ENCODE measurements at regions of chr20 and their contacts with region 1.

Region 1: DNA sequence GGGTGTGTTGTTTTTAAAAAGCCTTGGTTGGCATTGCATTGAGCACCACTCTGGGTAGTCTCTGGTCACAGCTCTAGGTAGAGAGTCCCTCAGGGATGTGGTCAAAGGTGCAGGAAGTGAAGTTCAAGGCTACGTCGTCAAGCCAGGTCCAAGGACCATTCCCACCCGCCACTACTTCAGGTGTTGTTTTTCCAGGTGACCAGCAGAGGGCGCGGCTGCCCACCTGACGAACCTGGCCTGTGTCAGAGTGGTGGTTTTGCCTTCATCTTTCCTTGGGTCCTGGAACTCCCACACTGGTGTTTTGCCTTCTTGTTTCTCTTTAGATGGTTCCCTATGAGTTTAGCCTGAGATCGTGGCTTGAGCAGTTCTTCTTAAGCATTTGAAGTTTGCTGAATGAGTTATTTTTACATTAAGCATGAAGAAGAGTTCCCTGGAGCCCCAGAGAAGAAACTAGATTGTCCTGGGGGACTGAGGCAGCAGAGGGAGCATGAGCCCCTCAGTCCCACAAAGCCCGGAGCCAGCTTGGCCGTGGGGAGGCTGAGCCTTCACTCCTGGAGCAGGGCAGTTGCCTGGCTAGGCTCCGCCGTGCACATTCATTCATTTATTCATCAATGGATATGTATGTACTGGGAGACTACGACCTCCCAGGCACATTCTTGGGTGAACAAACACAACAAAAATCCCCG is 5.6 kb upstream of the PHACTR3 start:
- DNase-seq: peak; percentile 13 to 49
- H3K4me3 ChIP-seq: no peak overlapping the region
- H3K4me1 ChIP-seq: no peaks in the 10 kb centered on the region
- H3K27me3 ChIP-seq: peaks cover 5% of the 10 kb centered on the region

Region 2: DNA sequence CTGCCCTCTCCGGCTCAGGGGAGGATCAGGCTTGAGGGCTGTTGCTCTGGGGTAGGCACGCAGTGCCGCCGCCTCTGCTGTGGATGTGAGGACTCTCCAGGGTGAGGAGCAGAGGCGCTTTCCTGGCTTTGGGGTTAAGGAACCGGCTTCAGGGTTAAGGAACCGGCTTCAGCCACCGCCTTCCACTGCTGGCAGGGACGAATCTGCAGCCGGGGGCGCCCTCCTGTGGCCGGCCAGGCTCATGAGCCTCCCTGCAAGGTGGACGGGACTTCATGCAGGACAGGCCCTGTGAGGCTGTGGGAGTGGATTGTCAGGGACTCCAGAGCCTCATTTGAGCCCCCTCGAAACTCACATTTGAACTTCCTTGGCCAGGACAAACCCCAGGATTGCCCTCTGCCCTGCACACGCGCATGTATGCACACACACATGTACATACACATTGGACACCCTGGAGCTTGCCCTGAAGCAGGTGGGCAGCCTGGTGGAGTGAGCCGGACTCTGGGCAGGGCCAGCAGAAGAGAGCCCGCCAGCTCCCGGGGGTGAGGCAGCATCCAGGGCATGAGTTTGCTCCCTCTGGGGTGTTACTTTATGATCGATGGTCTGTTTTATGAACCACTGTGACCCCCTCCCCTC is 152.4 kb after region 1 on chr20:
- in situ Hi-C with region 1: loop called (anchors 10 kb)
- DNase-seq: peak; percentile 14 to 79
- H3K4me3 ChIP-seq: no peak overlapping the region
- H3K4me1 ChIP-seq: no peaks in the 10 kb centered on the region
- H3K27me3 ChIP-seq: peaks cover 3% of the 10 kb centered on the region; the same call in 1 of the 2 replicates

Measured in HAP-1 (cell line).